ENCODE measurements at regions of chr4 and their contacts with region 1.

Region 1: DNA sequence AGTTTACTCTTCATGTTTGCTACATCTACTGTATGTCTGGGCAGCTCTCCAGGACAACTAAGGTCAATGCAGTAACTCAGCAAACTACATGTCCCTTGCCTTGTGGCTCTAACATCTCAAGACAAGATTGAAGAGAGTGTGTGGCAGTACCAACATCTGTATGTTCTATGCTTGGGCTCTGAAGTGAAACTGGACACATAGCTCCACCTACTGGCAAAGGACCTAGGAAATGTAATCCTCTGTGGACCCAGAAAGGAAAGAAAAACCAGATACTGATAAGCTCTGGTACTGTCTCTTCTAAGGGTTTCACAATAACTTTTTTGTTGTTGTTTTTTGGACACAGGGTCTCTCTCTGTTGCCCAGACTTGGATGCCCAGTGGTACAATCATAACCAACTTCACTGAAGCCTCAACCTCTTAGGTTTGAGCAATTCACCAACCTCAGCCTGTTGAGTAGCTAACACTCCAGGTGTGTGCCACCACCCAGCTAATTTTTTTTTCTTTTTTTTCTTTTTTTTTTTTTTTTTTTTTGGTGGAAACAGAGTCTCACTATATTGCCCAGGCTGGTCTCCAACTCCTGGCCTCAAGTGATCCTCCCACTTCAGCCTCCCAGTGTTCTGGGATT is 64.1 kb downstream of the QDPR start:
- DNase-seq: peak; percentile 63
- H3K4me3 ChIP-seq: no peak overlapping the region
- H3K27ac ChIP-seq: no peak overlapping the region
- H3K4me1 ChIP-seq: no peaks in the 10 kb centered on the region
- H3K27me3 ChIP-seq: no peaks in the 10 kb centered on the region
- CTCF ChIP-seq: peak in 2 of 3 experiments; percentile 34 to 53
- POLR2A ChIP-seq: no peak

Region 2: DNA sequence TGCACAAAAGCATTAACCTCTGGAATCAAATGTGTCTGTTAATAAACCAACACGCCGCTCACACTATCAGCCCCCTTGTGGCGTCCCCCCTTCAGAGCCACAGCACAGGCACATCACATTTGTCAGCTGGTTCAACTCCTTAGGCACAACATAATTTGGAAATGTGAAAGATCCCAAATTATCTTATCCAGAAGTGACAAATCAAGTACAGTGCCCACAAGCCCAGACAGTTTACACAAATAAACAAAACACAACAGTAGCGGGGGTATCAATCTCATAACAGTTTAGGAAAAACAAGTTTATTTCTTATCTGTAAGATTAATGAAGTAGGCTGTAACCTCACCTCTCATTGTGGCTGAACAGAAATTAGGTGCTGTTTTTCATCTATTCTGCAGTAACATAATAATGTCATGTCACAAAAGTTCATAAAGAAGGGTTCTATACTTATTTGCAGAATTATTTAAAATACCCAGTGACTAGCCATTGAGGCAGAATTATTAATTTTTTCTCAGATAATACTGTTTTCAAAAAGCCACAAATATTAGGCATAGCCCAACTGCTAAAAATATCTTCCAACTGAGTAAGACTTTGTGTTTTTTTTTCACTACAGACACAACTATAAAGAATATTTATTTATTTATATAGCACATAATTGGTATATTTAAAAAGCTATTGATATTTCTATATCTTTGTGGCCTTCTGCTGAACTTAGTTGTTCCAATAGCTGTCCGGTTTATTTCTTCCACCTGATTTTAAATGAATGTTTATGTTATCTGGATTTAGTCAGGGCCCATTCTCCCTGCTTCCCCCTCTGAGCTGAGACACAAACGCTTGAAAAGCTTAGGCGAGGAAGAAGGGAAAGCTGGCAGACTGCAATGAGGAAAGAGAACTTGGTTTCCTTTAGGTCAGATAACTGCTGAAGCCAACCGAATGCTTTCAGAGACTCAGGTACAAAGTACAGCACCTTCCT is 150.6 kb before region 1 on chr4:
- intact Hi-C with region 1: no loop called
- DNase-seq: no peak
- H3K4me3 ChIP-seq: no peak overlapping the region
- H3K27ac ChIP-seq: no peak overlapping the region
- H3K4me1 ChIP-seq: no peaks in the 10 kb centered on the region
- H3K27me3 ChIP-seq: no peaks in the 10 kb centered on the region
- CTCF ChIP-seq: no peak
- POLR2A ChIP-seq: no peak

Region 3: DNA sequence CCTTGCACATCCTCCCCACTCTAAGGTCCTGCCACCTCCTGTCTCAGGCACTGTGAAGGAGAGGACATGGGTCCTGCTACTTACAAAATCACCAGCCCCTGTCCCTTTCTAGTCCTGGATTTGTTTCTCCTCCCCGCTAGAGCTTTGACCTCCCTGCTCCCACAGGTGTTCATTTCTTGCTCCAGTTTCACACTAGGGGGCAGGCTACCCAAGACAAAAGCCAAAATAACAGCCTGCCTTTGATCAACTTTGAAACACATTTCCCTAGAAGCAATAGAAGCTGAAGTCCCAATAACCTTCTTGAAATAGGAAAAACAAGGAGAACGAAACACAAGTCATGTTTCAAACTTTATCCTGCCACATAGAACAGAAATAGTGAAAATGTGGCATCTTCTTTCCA is 100.3 kb before region 1 on chr4:
- intact Hi-C with region 1: loop called (anchors 10 kb)
- DNase-seq: no peak
- H3K4me3 ChIP-seq: no peak overlapping the region
- H3K27ac ChIP-seq: no peak overlapping the region
- H3K4me1 ChIP-seq: no peaks in the 10 kb centered on the region
- H3K27me3 ChIP-seq: no peaks in the 10 kb centered on the region
- CTCF ChIP-seq: peak in 2 of 3 experiments; percentile 37 to 40
- POLR2A ChIP-seq: no peak

Measured in testis (tissue), 5 donors.